ENCODE measurements at regions of chr11 and their contacts with region 1.

Region 1: DNA sequence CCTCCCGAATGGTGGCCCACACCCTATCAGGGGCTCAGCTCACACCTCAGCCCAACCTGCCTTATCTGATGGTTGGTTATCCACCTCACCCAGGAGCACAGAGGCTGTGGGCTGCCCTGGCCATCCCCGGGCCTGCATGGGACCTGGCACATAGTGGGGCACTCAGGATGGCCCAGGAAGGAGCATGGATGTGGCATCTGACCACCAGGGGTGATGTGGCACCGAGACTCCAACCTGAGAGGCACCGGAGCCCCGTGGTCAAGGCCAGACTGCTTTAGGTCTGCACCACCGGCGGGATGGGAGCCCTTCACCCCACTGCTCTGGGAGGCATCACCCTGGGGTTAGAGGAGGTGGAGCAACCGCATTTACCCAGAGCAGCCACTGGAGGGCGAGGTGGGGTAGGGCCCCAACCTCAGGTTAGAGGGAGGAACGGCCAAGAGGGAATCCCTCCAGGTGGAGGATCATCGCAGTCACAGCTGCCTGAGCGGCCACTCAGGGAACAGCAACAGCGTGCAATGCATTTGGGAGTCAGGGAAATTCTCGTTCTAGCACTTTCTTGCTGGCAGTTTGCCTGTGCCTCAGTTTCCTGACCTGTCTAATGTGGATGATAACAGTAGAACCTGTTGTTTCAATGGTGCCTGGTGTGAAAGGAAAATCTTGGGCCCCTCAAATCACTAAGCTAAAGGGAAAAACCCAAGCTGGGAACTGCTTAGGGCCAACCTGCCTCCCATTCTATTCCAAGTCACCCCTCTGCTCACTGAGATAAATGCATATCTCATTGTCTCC is 52.9 kb upstream of the CARS1 start:
- DNase-seq: no peak
- H3K4me3 ChIP-seq: no peak overlapping the region
- CTCF ChIP-seq: peak; percentile 64

Region 2: GRCh38 chr11:3121931-3122774 is 12.0 kb after region 1 on chr11:
- CTCF ChIA-PET with region 1: interaction called, 19 read pairs
- POLR2A ChIA-PET with region 1: interaction called, 4 read pairs
- DNase-seq: no peak
- H3K4me3 ChIP-seq: no peak overlapping the region
- CTCF ChIP-seq: no peak

Region 3: GRCh38 chr11:3217676-3218482 is 107.8 kb after region 1 on chr11:
- CTCF ChIA-PET with region 1: interaction called, 15 read pairs
- POLR2A ChIA-PET with region 1: no interaction called
- DNase-seq: no peak
- H3K4me3 ChIP-seq: no peak overlapping the region
- CTCF ChIP-seq: no peak

Measured in AG04449 (cell line).